CD8-positive, alpha-beta T cell (primary cell): ENCODE measurements at regions of chr4 and their contacts with region 1.

Region 1: GRCh38 chr4:102627831-102628523 is 126.8 kb downstream of the NFKB1 start:
- DNase-seq: no peak
- ATAC-seq: no peak
- H3K4me3 ChIP-seq: no peak overlapping the region
- H3K4me3 Mint-ChIP-seq: no peak overlapping the region
- H3K27ac ChIP-seq: no peak overlapping the region
- H3K27ac Mint-ChIP-seq: peak overlapping the region; percentile 74
- H3K4me1 ChIP-seq: peaks cover 64% of the 10 kb centered on the region
- H3K4me1 Mint-ChIP-seq: peaks cover 77% of the 10 kb centered on the region
- H3K27me3 ChIP-seq: no peaks in the 10 kb centered on the region
- H3K27me3 Mint-ChIP-seq: no peaks in the 10 kb centered on the region
- CTCF ChIP-seq: no peak

Region 2: DNA sequence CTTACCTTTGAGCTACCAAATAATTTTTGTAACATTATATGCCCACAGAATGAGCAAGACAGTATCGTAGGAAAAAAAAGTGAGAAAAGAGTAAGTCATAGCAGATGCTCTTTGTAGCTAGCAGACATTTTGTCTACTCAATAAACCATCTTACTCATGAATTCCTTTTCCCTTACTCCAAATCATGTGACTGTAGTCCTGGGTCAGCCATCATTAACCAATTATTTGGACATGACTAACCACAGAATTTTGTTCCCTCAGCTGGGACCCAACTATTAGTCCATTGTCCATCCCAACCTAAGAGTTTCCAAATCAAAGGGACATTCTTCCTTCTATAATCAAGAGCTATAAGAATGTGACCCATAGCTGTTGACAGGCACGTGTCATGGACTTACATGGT is 188.0 kb after region 1 on chr4:
- CTCF ChIA-PET with region 1: no interaction called
- POLR2A ChIA-PET with region 1: no interaction called
- intact Hi-C with region 1: loop called in 1 of 2 experiments (anchors 2 kb)
- DNase-seq: no peak
- ATAC-seq: no peak
- H3K4me3 ChIP-seq: no peak overlapping the region
- H3K4me3 Mint-ChIP-seq: peak overlapping the region; percentile 48
- H3K27ac ChIP-seq: peak overlapping the region in 1 of 2 experiments; percentile 17
- H3K27ac Mint-ChIP-seq: peak overlapping the region; percentile 87
- H3K4me1 ChIP-seq: peaks cover 97% of the 10 kb centered on the region
- H3K4me1 Mint-ChIP-seq: peaks cover 85% of the 10 kb centered on the region
- H3K27me3 ChIP-seq: no peaks in the 10 kb centered on the region
- H3K27me3 Mint-ChIP-seq: no peaks in the 10 kb centered on the region
- CTCF ChIP-seq: no peak